Heart right ventricle (tissue), 16 donors: ENCODE measurements at regions of chr1 and their contacts with region 1.

Region 1: DNA sequence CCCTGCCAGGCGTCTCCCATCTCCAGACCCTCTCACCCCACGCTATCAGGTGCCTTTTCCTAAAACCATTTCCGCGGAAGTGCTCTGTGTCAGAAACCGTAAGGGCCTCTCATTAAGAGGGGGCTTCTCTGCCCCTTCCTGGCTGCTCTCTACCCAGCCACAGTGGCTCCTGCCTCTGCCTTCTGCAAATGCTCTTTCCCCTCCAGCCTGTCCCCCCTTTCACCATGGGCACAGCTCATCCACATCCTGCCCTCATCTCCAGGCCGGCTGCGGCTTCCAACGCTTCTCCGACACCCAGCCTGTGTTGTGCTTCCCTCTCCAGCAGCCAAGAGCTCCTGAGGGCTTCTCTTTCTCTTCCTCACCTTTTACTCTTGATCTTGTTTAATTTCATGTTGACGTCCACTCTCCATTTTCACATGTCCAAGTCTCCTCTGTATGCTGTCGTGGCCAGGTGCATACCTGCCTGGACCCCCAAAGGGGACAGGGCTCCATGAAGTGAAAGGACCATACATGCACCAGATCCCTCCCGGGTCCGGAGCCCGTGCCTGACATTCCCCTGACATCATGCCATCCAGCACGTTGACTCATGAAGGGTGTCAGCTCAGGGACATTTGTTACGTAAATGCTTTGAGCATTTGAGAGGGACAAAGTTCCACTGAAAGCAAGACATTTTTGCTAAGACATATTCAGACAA is 306.5 kb downstream of the AJAP1 start:
- DNase-seq: no peak
- ATAC-seq: no peak
- H3K4me3 ChIP-seq: no peak overlapping the region
- H3K27ac ChIP-seq: no peak overlapping the region
- H3K4me1 ChIP-seq: no peaks in the 10 kb centered on the region
- H3K27me3 ChIP-seq: peaks cover 0 to 21% (median 10%) of the 10 kb centered on the region in 7 donors
- CTCF ChIP-seq: no peak

Region 2: DNA sequence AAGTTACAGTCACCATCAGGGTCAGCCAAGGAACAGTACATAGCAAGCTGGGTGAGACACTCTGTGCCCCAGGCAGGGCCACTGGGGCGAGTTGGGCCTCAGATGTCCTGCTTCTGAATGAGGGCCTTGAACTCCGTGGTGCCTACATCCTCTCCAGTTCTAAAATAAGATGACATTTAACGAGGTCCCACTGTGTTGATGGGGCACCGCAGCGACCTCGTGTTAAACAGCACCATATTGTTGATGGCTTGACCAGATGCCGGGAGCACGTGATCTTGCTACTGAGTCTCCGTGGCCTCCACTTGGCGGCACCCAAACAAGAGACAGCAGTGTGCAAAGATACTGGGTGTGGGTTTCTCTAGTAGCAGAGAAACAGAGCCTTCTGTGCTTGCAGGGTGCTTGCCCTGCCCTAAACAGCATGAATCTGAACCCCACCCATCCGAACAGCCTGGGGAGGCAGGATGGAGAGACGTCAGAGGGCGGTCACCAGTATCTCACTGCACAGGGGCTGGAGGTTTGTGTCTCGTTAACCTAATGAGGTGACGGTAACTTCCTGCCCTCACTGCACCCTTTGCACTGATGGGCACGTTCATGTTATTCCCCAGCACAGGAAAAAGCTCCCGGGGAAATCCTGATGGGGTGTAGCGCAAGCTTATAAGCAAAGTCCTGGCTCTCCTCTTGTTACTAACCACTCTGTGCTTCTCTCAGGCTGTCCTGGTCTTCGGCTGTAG is 17.9 kb after region 1 on chr1:
- intact Hi-C with region 1: loop called in 1 of 10 experiments (anchors 1 kb)
- DNase-seq: no peak
- ATAC-seq: peak in 2 of 8 donors; percentile 34 to 62
- H3K4me3 ChIP-seq: no peak overlapping the region
- H3K27ac ChIP-seq: no peak overlapping the region
- H3K4me1 ChIP-seq: no peaks in the 10 kb centered on the region
- H3K27me3 ChIP-seq: peaks cover 0 to 22% (median 12%) of the 10 kb centered on the region in 7 donors
- CTCF ChIP-seq: no peak

Region 3: GRCh38 chr1:5150191-5150590 is 189.3 kb after region 1 on chr1:
- intact Hi-C with region 1: no loop called
- DNase-seq: no peak
- ATAC-seq: no peak
- H3K4me3 ChIP-seq: no peak overlapping the region
- H3K27ac ChIP-seq: no peak overlapping the region
- H3K4me1 ChIP-seq: no peaks in the 10 kb centered on the region
- H3K27me3 ChIP-seq: peaks cover 0 to 30% (median 11%) of the 10 kb centered on the region in 7 donors
- CTCF ChIP-seq: no peak